Naive thymus-derived CD4-positive, alpha-beta T cell (primary cell): ENCODE measurements at regions of chr1 and their contacts with region 1.

Region 1: DNA sequence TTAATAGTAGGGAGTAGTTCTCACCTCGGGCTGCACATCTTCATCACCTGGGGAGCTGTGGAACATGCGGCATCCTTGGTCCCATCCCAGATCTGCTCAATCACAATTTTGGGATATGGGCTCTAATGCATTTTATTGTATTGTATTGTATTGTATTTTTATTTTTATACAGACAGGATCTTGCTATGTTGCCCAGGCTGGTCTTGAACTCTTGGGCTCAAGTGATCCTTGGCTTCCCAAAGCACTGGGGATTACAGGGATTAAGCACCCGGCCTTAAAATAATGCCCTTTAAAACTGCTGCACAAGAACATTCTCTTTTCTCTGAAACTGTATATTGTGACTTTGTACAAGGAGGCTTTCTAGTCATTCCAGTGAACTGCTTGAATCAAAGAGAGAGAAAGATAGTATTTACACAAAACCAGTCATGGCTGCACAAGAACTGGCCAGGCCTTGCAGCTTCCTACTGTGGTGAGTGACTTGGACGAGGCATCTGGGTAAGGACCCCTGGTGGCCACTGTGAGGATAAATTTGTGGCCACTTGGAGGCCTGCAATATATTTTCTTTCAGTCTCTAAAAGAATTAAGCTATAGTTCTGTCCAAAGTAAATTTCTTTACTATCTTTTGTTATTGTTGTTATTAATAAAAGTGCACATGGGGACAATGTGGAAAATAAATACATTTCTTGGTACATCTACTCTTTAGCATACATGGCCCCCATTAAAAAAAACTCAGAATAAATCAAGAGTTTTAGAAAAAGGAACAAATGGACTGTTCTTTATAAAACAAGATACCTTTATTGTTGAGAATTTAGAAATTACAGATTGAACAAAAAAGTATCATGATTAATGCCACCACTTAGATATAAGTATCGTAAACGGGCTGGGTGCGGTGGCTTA is 48.0 kb downstream of the TBCE start:
- DNase-seq: peak in 8 of 9 donors; percentile 24 to 61 (median 46)
- ATAC-seq: peak; percentile 87
- H3K4me3 ChIP-seq: no peak overlapping the region
- H3K4me3 Mint-ChIP-seq: no peak overlapping the region
- H3K27ac ChIP-seq: no peak overlapping the region
- H3K27ac Mint-ChIP-seq: no peak overlapping the region
- H3K4me1 ChIP-seq: no peaks in the 10 kb centered on the region
- H3K4me1 Mint-ChIP-seq: peaks cover 0 to 15% (median 6%) of the 10 kb centered on the region in 7 donors
- H3K27me3 ChIP-seq: no peaks in the 10 kb centered on the region
- H3K27me3 Mint-ChIP-seq: no peaks in the 10 kb centered on the region

Region 2: DNA sequence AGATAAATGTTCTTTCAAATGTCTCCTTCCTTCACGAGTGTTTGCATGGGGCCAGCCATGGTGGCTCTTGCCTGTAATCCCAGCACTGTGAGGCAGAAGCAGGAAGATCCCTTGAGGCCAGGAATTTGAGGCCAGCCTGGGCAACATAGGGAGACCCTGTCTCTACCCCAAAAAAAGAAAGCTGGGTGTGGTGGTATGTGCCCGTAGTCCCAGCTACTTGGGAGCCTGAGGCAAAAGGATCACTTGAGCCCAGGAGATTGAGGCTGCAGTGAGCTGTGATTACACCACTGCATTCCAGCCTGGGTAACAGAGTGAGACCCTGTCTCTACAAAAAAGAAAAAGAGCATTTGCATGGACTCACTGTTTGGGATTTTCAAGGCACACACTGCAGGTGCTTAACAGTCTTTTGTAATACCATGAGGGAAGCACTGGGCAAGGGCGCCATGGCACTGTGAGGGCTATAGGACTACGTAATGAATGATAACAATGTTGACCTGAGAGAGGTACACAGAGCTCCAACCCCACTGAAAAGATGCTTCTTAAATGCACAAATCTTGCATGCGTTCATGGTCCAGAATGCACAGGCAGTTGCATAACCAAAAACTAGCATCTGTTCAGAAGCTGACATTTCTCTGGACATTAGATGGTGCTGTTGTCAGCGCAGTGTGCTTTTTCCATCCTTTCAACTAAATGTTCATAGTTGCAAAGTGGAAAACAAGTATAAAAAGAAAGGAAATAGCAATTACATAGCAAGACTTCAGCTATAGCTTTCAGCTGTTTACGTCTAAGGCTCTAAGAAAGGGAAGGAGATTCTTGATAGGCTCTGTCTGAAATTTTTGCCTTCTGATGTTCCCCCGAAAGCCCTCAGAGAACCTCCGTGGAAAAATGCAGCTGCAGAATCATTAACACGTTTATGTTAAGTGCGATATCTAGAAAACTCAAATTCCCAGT is 928.5 kb before region 1 on chr1:
- CTCF ChIA-PET with region 1: no interaction called
- POLR2A ChIA-PET with region 1: no interaction called
- intact Hi-C with region 1: loop called (anchors 2 kb)
- DNase-seq: peak in 6 of 9 donors; percentile 17 to 60 (median 44)
- ATAC-seq: peak; percentile 80
- H3K4me3 ChIP-seq: no peak overlapping the region
- H3K4me3 Mint-ChIP-seq: peak overlapping the region in 9 of 10 donors; percentile 10 to 74 (median 57)
- H3K27ac ChIP-seq: no peak overlapping the region
- H3K27ac Mint-ChIP-seq: peak overlapping the region; percentile 18 to 85 (median 79)
- H3K4me1 ChIP-seq: peaks cover 0 to 20% of the 10 kb centered on the region in 2 donors
- H3K4me1 Mint-ChIP-seq: peaks cover 20 to 42% (median 35%) of the 10 kb centered on the region in 7 donors
- H3K27me3 ChIP-seq: no peaks in the 10 kb centered on the region
- H3K27me3 Mint-ChIP-seq: peaks cover 0 to 22% (median 6%) of the 10 kb centered on the region in 5 donors

Region 3: GRCh38 chr1:234699795-234700665 is 715.2 kb before region 1 on chr1:
- CTCF ChIA-PET with region 1: no interaction called
- POLR2A ChIA-PET with region 1: no interaction called
- intact Hi-C with region 1: no loop called
- DNase-seq: no peak
- ATAC-seq: peak; percentile 53
- H3K4me3 ChIP-seq: no peak overlapping the region
- H3K4me3 Mint-ChIP-seq: no peak overlapping the region
- H3K27ac ChIP-seq: no peak overlapping the region
- H3K27ac Mint-ChIP-seq: peak overlapping the region in 1 of 9 donors; percentile 18
- H3K4me1 ChIP-seq: no peaks in the 10 kb centered on the region
- H3K4me1 Mint-ChIP-seq: peaks cover 3 to 24% (median 5%) of the 10 kb centered on the region in 7 donors
- H3K27me3 ChIP-seq: no peaks in the 10 kb centered on the region
- H3K27me3 Mint-ChIP-seq: peaks cover 0 to 3% (median 0%) of the 10 kb centered on the region in 5 donors

Region 4: DNA sequence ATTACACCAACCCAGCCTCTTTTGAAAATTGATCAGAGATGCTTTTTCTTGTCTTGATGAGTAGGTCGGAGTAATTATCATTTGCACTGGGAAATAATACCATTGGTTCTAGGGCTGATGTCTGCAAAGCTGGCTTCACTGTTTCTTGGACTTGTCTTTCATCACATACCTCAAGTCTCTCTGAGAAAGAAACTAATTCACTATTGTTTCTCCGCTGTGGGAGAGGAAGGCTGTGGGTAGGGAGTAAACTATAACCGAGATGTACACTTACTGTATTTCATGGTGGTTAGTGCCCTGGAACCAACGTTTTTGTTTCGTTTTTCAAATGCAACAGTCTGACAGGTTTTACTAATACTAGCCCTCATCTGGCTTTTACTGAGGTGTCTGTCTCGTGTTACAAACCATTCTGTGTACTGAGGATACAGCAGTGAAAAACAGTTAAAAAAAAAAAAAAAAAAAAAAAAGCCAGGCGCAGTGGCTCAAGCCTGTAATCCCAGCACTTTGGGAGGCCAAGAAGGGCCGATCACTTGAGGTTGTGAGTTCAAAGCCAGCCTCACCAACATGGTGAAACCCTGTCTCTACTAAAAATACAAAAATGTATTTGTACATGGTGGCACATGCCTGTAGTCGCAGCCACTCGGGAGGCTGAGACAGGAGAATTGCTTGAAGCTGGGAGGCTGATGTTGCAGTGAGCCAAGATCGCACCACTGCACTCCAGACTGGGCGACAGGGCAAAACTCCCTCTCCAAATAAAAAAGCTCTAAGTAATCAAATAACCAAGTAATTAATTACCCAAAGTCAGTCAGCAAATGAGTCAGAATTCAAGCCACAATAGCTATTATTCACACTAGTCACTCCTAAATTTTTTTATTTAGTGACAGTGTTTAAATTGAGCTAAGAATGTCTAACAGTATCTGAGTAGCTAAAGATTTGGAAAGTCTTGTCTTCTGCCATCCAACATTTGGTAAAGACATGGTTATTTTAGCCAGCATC is 309.9 kb before region 1 on chr1:
- CTCF ChIA-PET with region 1: interaction called, 41 read pairs
- POLR2A ChIA-PET with region 1: interaction called, 3 read pairs
- intact Hi-C with region 1: loop called (anchors 1 kb)
- DNase-seq: peak in 1 of 9 donors; percentile 21
- ATAC-seq: peak; percentile 29
- H3K4me3 ChIP-seq: peak overlapping the region; percentile 55
- H3K4me3 Mint-ChIP-seq: peak overlapping the region in 9 of 10 donors; percentile 15 to 85 (median 77)
- H3K27ac ChIP-seq: no peak overlapping the region
- H3K27ac Mint-ChIP-seq: peak overlapping the region in 2 of 9 donors; percentile 54 to 76
- H3K4me1 ChIP-seq: peaks cover 21 to 23% of the 10 kb centered on the region in 2 donors
- H3K4me1 Mint-ChIP-seq: peaks cover 20 to 47% (median 41%) of the 10 kb centered on the region in 7 donors
- H3K27me3 ChIP-seq: no peaks in the 10 kb centered on the region
- H3K27me3 Mint-ChIP-seq: peaks cover 0 to 5% (median 0%) of the 10 kb centered on the region in 5 donors

Region 5: GRCh38 chr1:235206533-235207208 is 208.6 kb before region 1 on chr1:
- CTCF ChIA-PET with region 1: interaction called, 3 read pairs
- POLR2A ChIA-PET with region 1: no interaction called
- intact Hi-C with region 1: loop called in 1 of 2 experiments (anchors 2 kb)
- DNase-seq: peak in 1 of 9 donors; percentile 47
- ATAC-seq: peak; percentile 79
- H3K4me3 ChIP-seq: no peak overlapping the region
- H3K4me3 Mint-ChIP-seq: peak overlapping the region; percentile 8 to 77 (median 60)
- H3K27ac ChIP-seq: peak overlapping the region; percentile 36
- H3K27ac Mint-ChIP-seq: peak overlapping the region; percentile 58 to 89 (median 85)
- H3K4me1 ChIP-seq: peaks cover 0 to 18% of the 10 kb centered on the region in 2 donors
- H3K4me1 Mint-ChIP-seq: peaks cover 18 to 42% (median 32%) of the 10 kb centered on the region in 7 donors
- H3K27me3 ChIP-seq: no peaks in the 10 kb centered on the region
- H3K27me3 Mint-ChIP-seq: no peaks in the 10 kb centered on the region

Region 6: DNA sequence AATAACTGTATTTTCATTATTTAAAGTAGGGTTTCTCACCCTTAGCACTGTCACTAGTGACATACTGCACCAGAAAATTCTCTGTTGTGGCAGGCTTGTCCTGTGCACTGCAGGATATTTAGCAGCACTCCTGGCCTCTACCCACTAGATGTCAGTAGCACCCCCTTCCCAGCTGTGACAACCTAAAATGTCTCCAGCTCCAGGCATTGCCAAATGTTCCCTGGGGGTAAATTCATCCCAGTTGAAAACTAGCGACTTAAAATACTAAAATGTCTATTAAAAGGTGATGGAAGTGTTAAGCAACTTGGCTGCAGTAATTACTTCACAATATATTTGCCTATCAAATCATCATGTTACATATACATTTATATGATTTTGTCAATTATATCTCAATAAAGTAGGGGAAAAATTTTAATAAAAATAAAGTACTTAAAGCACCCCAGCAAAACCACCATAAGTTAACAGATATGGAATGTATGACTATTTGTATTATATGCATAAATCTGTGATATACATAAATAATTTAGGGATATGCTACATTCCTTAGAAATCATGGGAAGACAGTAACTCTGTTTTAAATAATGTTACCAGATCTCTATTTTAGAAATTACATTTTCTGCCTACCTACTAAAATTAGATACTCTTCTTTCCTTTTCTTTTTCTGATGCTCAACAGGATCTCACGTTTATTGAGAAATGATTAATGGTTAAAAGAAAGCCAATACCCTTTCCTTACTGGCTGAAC is 161.9 kb before region 1 on chr1:
- CTCF ChIA-PET with region 1: interaction called, 34 read pairs
- POLR2A ChIA-PET with region 1: no interaction called
- intact Hi-C with region 1: loop called (anchors 1 kb)
- DNase-seq: peak; percentile 27 to 70 (median 63)
- ATAC-seq: peak; percentile 96
- H3K4me3 ChIP-seq: no peak overlapping the region
- H3K4me3 Mint-ChIP-seq: no peak overlapping the region
- H3K27ac ChIP-seq: no peak overlapping the region
- H3K27ac Mint-ChIP-seq: peak overlapping the region in 5 of 9 donors; percentile 16 to 65 (median 23)
- H3K4me1 ChIP-seq: peaks cover 0 to 5% of the 10 kb centered on the region in 2 donors
- H3K4me1 Mint-ChIP-seq: peaks cover 13 to 51% (median 41%) of the 10 kb centered on the region in 7 donors
- H3K27me3 ChIP-seq: no peaks in the 10 kb centered on the region
- H3K27me3 Mint-ChIP-seq: no peaks in the 10 kb centered on the region

Region 7: GRCh38 chr1:235367000-235367908 is 48.0 kb before region 1 on chr1 and contains the start of gene TBCE:
- CTCF ChIA-PET with region 1: interaction called, 4 read pairs
- POLR2A ChIA-PET with region 1: no interaction called
- intact Hi-C with region 1: loop called in 1 of 2 experiments (anchors 2 kb)
- DNase-seq: peak; percentile 61 to 89 (median 63)
- ATAC-seq: peak; percentile 99
- H3K4me3 ChIP-seq: peak within 1 kb of the TSS; percentile 90
- H3K4me3 Mint-ChIP-seq: peak within 1 kb of the TSS; percentile 91 to 99 (median 98)
- H3K27ac ChIP-seq: peak within 1 kb of the TSS; percentile 74
- H3K27ac Mint-ChIP-seq: peak within 1 kb of the TSS; percentile 86 to 97 (median 93)
- H3K4me1 ChIP-seq: peaks cover 0 to 11% of the 10 kb centered on the region in 2 donors
- H3K4me1 Mint-ChIP-seq: peaks cover 13 to 41% (median 38%) of the 10 kb centered on the region in 7 donors
- H3K27me3 ChIP-seq: no peaks in the 10 kb centered on the region
- H3K27me3 Mint-ChIP-seq: no peaks in the 10 kb centered on the region
- total RNA-seq, gene TBCE: 16.8 to 26.1 (median 20.6) TPM